ENCODE measurements at regions of chr2 and their contacts with region 1.

Region 1: GRCh38 chr2:105344704-105345345 is 7.5 kb downstream of the C2orf49 start:
- DNase-seq: peak; percentile 64 to 82 (median 74)
- H3K4me3 ChIP-seq: no peak overlapping the region
- H3K27ac ChIP-seq: no peak overlapping the region
- H3K4me1 ChIP-seq: peaks cover 0 to 4% (median 0%) of the 10 kb centered on the region in 4 experiments
- H3K27me3 ChIP-seq: no peaks in the 10 kb centered on the region

Region 2: DNA sequence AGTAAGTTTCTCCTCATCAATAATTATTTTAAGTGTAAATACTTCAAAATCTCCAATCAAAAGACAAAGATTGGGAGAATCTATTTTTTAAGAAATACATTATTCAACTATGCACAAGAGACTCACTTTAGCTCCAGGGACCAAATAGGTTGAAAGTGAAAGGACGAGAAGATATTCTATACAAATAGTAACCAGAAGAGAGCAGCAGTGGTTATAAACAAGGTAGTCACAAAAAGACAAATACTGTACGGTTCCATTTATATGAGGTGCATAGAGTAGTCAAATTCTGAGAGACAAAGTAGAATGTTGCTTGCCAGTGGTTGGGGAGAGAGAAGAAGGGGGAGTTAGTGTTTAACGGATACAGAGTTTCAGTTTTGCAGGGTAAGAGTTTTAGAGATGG is 421.2 kb before region 1 on chr2:
- CTCF ChIA-PET with region 1: no interaction called
- POLR2A ChIA-PET with region 1: no interaction called
- DNase-seq: no peak
- H3K4me3 ChIP-seq: no peak overlapping the region
- H3K27ac ChIP-seq: no peak overlapping the region
- H3K4me1 ChIP-seq: no peaks in the 10 kb centered on the region
- H3K27me3 ChIP-seq: no peaks in the 10 kb centered on the region

Region 3: DNA sequence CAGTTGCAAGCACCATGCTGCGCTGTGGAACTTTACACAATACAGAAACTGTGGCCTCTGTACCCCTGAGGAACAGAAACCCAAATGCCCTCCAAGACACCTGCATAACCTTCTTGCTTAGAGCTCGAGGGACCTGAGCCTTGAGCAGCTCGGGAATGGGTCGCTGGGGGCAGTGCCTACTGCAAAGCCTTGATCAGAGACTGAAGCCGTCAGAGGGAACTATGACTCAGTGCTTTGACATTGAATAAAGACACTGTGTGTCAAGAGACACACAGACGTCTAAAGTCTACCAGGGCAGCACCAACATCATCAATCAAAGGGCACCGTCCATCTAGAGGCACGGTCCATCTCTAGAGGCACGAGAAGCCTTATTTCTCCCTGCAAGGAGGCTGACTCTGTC is 72.6 kb before region 1 on chr2:
- CTCF ChIA-PET with region 1: no interaction called
- POLR2A ChIA-PET with region 1: no interaction called
- DNase-seq: no peak
- H3K4me3 ChIP-seq: no peak overlapping the region
- H3K27ac ChIP-seq: no peak overlapping the region
- H3K4me1 ChIP-seq: no peaks in the 10 kb centered on the region
- H3K27me3 ChIP-seq: no peaks in the 10 kb centered on the region

Region 4: GRCh38 chr2:105357122-105357521 is 12.3 kb after region 1 on chr2:
- CTCF ChIA-PET with region 1: interaction called, 15 read pairs
- POLR2A ChIA-PET with region 1: no interaction called
- DNase-seq: no peak
- H3K4me3 ChIP-seq: no peak overlapping the region
- H3K27ac ChIP-seq: no peak overlapping the region
- H3K4me1 ChIP-seq: peaks cover 10 to 16% (median 14%) of the 10 kb centered on the region in 4 experiments
- H3K27me3 ChIP-seq: no peaks in the 10 kb centered on the region

Region 5: GRCh38 chr2:105362862-105363591 is 18.2 kb after region 1 on chr2:
- CTCF ChIA-PET with region 1: interaction called, 57 read pairs
- POLR2A ChIA-PET with region 1: no interaction called
- DNase-seq: peak in 2 of 3 donors; percentile 72 to 81
- H3K4me3 ChIP-seq: peak overlapping the region in 1 of 7 experiments; percentile 29
- H3K27ac ChIP-seq: no peak overlapping the region
- H3K4me1 ChIP-seq: peaks cover 10 to 33% (median 31%) of the 10 kb centered on the region in 4 experiments
- H3K27me3 ChIP-seq: no peaks in the 10 kb centered on the region